ENCODE measurements at regions of chr5 and their contacts with region 1.

Region 1: DNA sequence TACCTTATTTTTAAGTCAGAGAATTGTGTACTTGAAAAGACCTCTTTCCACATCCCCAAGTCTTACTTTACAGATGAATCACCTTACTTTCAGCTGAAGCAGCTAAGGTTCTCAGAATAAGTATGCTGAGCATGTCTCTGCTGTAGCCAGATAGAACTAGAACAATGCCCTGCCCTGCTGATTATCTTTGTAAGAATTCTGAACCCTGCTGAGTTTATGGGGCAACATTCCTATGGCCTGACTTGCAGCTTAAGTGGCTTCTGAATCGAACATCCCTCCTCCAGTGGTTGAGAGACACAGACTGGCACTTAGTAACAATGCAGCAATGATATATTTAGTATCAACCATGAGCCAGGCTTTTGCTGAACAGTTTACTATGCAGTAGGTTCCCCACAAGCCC is 592.0 kb upstream of the WWC1 start:
- DNase-seq: peak; percentile 94
- ATAC-seq: peak; percentile 98
- H3K4me3 ChIP-seq: 0 out of 2 replicates have a peak overlapping the region, but pooled peaks have one; percentile 27
- H3K27ac ChIP-seq: peak overlapping the region; percentile 90
- H3K4me1 ChIP-seq: peaks cover 30% of the 10 kb centered on the region
- H3K27me3 ChIP-seq: no peaks in the 10 kb centered on the region
- CTCF ChIP-seq: no peak

Region 2: DNA sequence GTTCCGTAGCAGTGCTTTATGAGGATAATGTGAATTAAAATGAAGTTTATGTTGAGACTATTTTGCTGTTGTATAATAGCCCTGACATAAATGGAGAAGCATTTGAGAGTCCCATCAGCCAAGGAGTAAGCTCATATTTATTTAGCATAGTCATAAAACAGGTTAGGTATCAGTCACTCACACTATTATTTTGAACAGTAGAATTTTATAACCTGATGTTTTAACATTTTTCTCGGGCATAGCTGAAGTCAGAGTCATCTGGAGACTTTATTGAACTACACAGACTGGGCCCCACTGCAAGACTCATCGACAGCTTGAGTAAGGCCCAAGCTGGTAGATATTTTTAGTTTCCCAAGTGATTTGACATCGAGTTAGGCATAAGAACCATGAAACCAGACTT is 28.3 kb before region 1 on chr5:
- CTCF ChIA-PET with region 1: no interaction called
- POLR2A ChIA-PET with region 1: no interaction called
- intact Hi-C with region 1: loop called (anchors 2 kb)
- DNase-seq: peak; percentile 54
- ATAC-seq: peak; percentile 83
- H3K4me3 ChIP-seq: no peak overlapping the region
- H3K27ac ChIP-seq: no peak overlapping the region
- H3K4me1 ChIP-seq: peaks cover 8% of the 10 kb centered on the region
- H3K27me3 ChIP-seq: no peaks in the 10 kb centered on the region
- CTCF ChIP-seq: no peak

Region 3: GRCh38 chr5:167712986-167713585 is 13.7 kb after region 1 on chr5:
- CTCF ChIA-PET with region 1: no interaction called
- POLR2A ChIA-PET with region 1: interaction called, 4 read pairs
- intact Hi-C with region 1: loop called (anchors 2 kb)
- DNase-seq: peak; percentile 25
- ATAC-seq: peak; percentile 75
- H3K4me3 ChIP-seq: no peak overlapping the region
- H3K27ac ChIP-seq: no peak overlapping the region
- H3K4me1 ChIP-seq: no peaks in the 10 kb centered on the region
- H3K27me3 ChIP-seq: no peaks in the 10 kb centered on the region
- CTCF ChIP-seq: no peak